AG04450 (cell line): ENCODE measurements at regions of chr5 and their contacts with region 1.

Region 1: DNA sequence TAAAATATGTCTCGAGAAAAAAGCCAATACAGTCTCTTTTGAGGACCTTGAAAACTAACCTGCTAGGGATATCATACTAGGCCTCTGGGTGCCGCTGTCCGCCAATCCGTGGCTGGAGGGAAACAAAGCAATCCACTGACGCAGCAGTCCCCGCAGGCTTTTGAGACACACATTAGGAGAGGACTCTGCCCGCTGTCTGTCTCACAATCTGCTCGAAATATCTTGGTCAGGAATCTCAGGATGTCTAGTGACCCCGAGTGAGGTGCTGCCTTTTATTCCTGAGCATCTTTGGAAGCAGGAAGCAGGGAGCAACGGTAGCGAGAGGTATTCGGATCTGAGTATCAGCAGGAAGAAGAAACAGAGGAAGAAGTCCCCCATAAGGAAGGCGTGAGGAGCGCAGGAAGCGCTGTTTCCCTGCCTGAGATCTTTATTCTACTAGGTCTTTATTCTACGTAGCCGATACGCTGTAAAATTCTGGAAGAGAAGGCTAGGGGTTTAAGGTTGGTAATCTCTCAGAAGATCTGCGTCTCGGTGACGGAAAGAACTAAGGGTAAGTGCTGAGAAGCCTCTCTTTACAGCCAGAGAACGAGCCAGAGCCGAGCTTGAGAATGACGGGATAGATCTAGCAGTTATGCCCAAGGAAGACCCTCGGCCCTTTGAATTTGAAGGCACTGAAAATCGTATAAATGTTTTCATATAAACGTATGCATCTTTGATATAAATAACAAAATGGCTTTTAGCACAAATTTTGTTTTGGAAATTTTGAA is 4.0 kb upstream of the PCDHGA1 start:
- DNase-seq: peak; percentile 49
- H3K4me3 ChIP-seq: peak overlapping the region; percentile 62
- H3K27ac ChIP-seq: peak overlapping the region; percentile 71
- H3K27me3 ChIP-seq: peaks cover 7% of the 10 kb centered on the region
- CTCF ChIP-seq: peak; percentile 74

Region 2: DNA sequence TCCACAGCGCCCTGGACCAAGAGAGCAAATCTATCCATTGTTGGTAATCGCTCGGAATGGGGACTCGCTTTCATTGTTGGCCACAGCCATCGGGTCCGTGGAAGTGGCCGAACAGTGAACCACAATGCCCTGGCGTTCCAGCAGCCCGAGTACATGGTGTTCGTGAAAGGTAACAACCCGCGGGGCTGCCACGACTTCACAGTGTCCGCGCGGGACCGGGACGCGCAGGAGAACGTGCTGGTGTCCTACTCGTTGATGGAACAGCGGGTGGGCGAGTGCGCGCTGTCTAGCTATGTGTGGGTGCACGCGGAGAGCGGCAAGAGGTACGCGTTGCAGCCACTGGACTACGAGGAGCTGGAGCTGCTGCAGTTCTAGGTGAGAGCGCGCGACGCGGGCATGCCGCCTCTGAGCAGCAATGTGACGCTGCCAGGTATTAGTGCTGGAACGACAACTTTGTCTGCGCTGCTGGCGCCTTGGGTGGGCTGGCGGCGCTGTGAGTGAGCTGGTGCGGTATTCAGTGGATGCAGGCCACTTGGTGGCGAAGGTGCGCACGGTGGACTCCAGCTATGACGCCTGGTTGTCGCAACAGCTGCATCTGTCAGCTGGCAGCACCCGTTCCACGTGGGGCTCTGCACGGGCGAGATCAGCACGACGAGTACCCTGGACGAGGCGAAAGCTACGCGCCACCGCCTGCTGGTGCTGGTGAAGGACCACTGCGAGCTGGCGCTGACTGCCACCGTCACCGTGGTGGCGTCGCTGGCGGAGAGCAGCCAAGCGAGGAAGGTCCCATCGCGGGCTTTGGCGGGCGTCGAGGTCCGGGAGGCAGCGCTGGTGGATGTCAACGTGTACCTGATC is 463.6 kb before region 1 on chr5:
- CTCF ChIA-PET with region 1: no interaction called
- POLR2A ChIA-PET with region 1: no interaction called
- DNase-seq: no peak
- H3K4me3 ChIP-seq: no peak overlapping the region
- H3K27ac ChIP-seq: no peak overlapping the region
- H3K27me3 ChIP-seq: no peaks in the 10 kb centered on the region
- CTCF ChIP-seq: no peak

Region 3: GRCh38 chr5:141338538-141339306 is 12.5 kb after region 1 on chr5 and contains the start of gene PCDHGA2:
- CTCF ChIA-PET with region 1: interaction called, 23 read pairs
- POLR2A ChIA-PET with region 1: no interaction called
- DNase-seq: no peak
- H3K4me3 ChIP-seq: peak within 1 kb of the TSS; percentile 51
- H3K27ac ChIP-seq: no peak within 1 kb of the TSS
- H3K27me3 ChIP-seq: peaks cover 6% of the 10 kb centered on the region
- CTCF ChIP-seq: peak; percentile 57
- polyA plus RNA-seq, gene PCDHGA2: 6.1 and 6.3 TPM in 2 replicates

Region 4: GRCh38 chr5:141349917-141350619 is 23.8 kb after region 1 on chr5 and contains the start of gene PCDHGB1:
- CTCF ChIA-PET with region 1: interaction called, 13 read pairs
- POLR2A ChIA-PET with region 1: no interaction called
- DNase-seq: no peak
- H3K4me3 ChIP-seq: peak within 1 kb of the TSS; percentile 46
- H3K27ac ChIP-seq: no peak within 1 kb of the TSS
- H3K27me3 ChIP-seq: peaks cover 2% of the 10 kb centered on the region
- CTCF ChIP-seq: peak; percentile 54
- polyA plus RNA-seq, gene PCDHGB1: 3.2 TPM in 2 replicates